K562 (cell line): ENCODE measurements at regions of chr1 and their contacts with region 1.

Region 1: GRCh38 chr1:207404849-207405525 is 49.1 kb upstream of the CR2 start:
- DNase-seq: peak; percentile 66 to 78 (median 68)
- ATAC-seq: peak; percentile 98
- H3K4me3 ChIP-seq: no peak overlapping the region
- H3K27ac ChIP-seq: no peak overlapping the region
- H3K4me1 ChIP-seq: peaks cover 0 to 7% of the 10 kb centered on the region in 2 experiments; a peak in 2 of 5 replicates
- H3K27me3 ChIP-seq: no peaks in the 10 kb centered on the region
- CTCF ChIP-seq: peak; percentile 71 to 86 (median 74)
- EP300 ChIP-seq: no peak
- POLR2A ChIP-seq: no peak
- RAD21 ChIP-seq: peak; percentile 95 to 99

Region 2: DNA sequence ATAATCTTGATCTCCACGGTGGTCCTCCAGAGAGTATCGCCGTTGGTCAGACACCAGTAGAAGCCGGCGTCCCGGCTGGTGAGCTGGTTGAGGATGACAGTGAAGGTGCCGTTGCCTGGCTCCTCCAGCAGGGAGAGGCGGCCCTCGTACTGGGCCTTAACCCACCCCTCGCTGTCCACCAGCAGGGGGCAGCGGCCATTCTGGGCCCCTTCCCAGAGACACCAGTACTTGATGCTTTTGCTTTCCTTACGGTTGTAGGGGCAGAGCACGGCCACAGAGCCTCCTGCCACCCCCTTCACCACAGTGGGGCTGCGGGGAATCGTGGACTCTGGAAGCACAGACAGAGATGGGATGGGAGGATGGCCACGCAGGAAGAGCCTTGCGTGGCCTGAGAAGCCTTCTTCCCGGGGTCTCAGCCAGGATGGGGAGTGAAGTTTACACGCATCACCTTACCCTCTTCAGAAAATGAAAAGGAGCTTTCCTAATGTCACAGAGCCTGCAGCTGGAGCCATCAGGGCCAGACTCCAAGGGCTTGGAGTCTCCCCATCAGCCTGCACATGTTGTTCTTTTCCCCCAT is 469.4 kb before region 1 on chr1:
- CTCF ChIA-PET with region 1: interaction called, 3 read pairs
- POLR2A ChIA-PET with region 1: no interaction called
- in situ Hi-C with region 1: no loop called
- intact Hi-C with region 1: loop called (anchors 5 kb)
- DNase-seq: peak; percentile 91 to 96 (median 92)
- ATAC-seq: peak; percentile 99
- H3K4me3 ChIP-seq: no peak overlapping the region
- H3K27ac ChIP-seq: no peak overlapping the region
- H3K4me1 ChIP-seq: peaks cover 9% of the 10 kb centered on the region in 2 experiments; a peak in 4 of 5 replicates
- H3K27me3 ChIP-seq: no peaks in the 10 kb centered on the region
- CTCF ChIP-seq: peak; percentile 100
- EP300 ChIP-seq: peak; percentile 31; the same call in 1 of the 2 replicates
- POLR2A ChIP-seq: no peak
- RAD21 ChIP-seq: peak; percentile 99

Region 3: DNA sequence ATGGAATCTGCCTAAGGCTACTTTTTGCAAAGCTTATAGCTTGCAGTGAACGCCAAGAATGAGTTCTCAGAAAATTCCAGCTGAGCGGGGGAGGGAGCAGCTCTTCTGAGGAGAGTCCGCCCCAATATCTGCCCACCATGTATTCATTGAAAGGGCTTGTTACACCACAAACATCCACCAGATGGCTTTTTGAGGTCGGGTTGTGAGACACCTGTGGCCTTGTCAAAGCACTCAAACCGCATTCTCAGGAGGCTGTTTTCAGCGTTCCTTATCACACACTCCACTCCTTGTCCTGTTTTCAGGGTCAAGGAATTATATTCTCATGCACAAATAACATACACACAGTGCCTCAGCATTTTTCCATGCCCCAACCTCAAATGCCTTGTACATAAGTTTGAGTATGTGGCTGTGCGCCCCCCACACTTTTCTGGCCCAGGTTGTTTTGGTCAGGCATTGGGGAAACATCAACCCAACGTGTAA is 320.2 kb before region 1 on chr1:
- CTCF ChIA-PET with region 1: interaction called, 22 read pairs
- POLR2A ChIA-PET with region 1: no interaction called
- in situ Hi-C with region 1: loop called (anchors 5 kb)
- intact Hi-C with region 1: loop called (anchors 1 kb)
- DNase-seq: peak; percentile 77 to 95 (median 86)
- ATAC-seq: peak; percentile 98
- H3K4me3 ChIP-seq: no peak overlapping the region
- H3K27ac ChIP-seq: peak overlapping the region; percentile 20; the same call in 2 of the 3 replicates
- H3K4me1 ChIP-seq: peaks cover 0 to 15% of the 10 kb centered on the region in 2 experiments; a peak in 4 of 5 replicates
- H3K27me3 ChIP-seq: no peaks in the 10 kb centered on the region
- CTCF ChIP-seq: peak; percentile 86 to 87 (median 87)
- EP300 ChIP-seq: peak; percentile 75
- POLR2A ChIP-seq: no peak
- RAD21 ChIP-seq: peak; percentile 98 to 99

Region 4: GRCh38 chr1:207181838-207182237 is 223.1 kb before region 1 on chr1:
- CTCF ChIA-PET with region 1: interaction called, 16 read pairs
- POLR2A ChIA-PET with region 1: no interaction called
- in situ Hi-C with region 1: no loop called
- intact Hi-C with region 1: loop called (anchors 1 kb)
- DNase-seq: peak in 1 of 4 experiments; percentile 28
- ATAC-seq: peak; percentile 41; the same call in 1 of the 3 replicates
- H3K4me3 ChIP-seq: no peak overlapping the region
- H3K27ac ChIP-seq: no peak overlapping the region
- H3K4me1 ChIP-seq: no peaks in the 10 kb centered on the region
- H3K27me3 ChIP-seq: no peaks in the 10 kb centered on the region
- CTCF ChIP-seq: peak in 2 of 3 experiments; percentile 29 to 66; a peak in 3 of 6 replicates
- EP300 ChIP-seq: no peak
- POLR2A ChIP-seq: no peak
- RAD21 ChIP-seq: peak; percentile 87 to 93

Region 5: GRCh38 chr1:207259391-207259790 is 145.6 kb before region 1 on chr1:
- CTCF ChIA-PET with region 1: no interaction called
- POLR2A ChIA-PET with region 1: no interaction called
- in situ Hi-C with region 1: no loop called
- intact Hi-C with region 1: loop called (anchors 1 kb)
- DNase-seq: peak in 1 of 4 experiments; percentile 46
- ATAC-seq: peak; percentile 89
- H3K4me3 ChIP-seq: no peak overlapping the region
- H3K27ac ChIP-seq: no peak overlapping the region
- H3K4me1 ChIP-seq: no peaks in the 10 kb centered on the region; a peak in 1 of 5 replicates
- H3K27me3 ChIP-seq: no peaks in the 10 kb centered on the region
- CTCF ChIP-seq: peak; percentile 51 to 56 (median 55); a peak in 5 of 6 replicates
- EP300 ChIP-seq: no peak
- POLR2A ChIP-seq: no peak
- RAD21 ChIP-seq: peak; percentile 46 to 84

Region 6: GRCh38 chr1:207274882-207275281 is 130.1 kb before region 1 on chr1:
- CTCF ChIA-PET with region 1: no interaction called
- POLR2A ChIA-PET with region 1: no interaction called
- in situ Hi-C with region 1: no loop called
- intact Hi-C with region 1: no loop called
- DNase-seq: no peak
- ATAC-seq: no peak
- H3K4me3 ChIP-seq: no peak overlapping the region
- H3K27ac ChIP-seq: no peak overlapping the region
- H3K4me1 ChIP-seq: no peaks in the 10 kb centered on the region
- H3K27me3 ChIP-seq: no peaks in the 10 kb centered on the region
- CTCF ChIP-seq: no peak
- EP300 ChIP-seq: no peak
- POLR2A ChIP-seq: no peak
- RAD21 ChIP-seq: no peak

Region 7: GRCh38 chr1:207393610-207394009 is 11.4 kb before region 1 on chr1:
- CTCF ChIA-PET with region 1: no interaction called
- POLR2A ChIA-PET with region 1: no interaction called
- in situ Hi-C with region 1: no loop called
- intact Hi-C with region 1: no loop called
- DNase-seq: no peak
- ATAC-seq: no peak
- H3K4me3 ChIP-seq: no peak overlapping the region
- H3K27ac ChIP-seq: no peak overlapping the region
- H3K4me1 ChIP-seq: no peaks in the 10 kb centered on the region; a peak in 1 of 5 replicates
- H3K27me3 ChIP-seq: no peaks in the 10 kb centered on the region
- CTCF ChIP-seq: no peak
- EP300 ChIP-seq: no peak
- POLR2A ChIP-seq: no peak
- RAD21 ChIP-seq: no peak

Region 8: GRCh38 chr1:207698822-207699483 is 294.0 kb after region 1 on chr1:
- CTCF ChIA-PET with region 1: interaction called, 3 read pairs
- POLR2A ChIA-PET with region 1: no interaction called
- in situ Hi-C with region 1: no loop called
- intact Hi-C with region 1: loop called (anchors 2 kb)
- DNase-seq: peak; percentile 30 to 87 (median 37)
- ATAC-seq: peak; percentile 92
- H3K4me3 ChIP-seq: no peak overlapping the region
- H3K27ac ChIP-seq: no peak overlapping the region
- H3K4me1 ChIP-seq: no peaks in the 10 kb centered on the region
- H3K27me3 ChIP-seq: no peaks in the 10 kb centered on the region
- CTCF ChIP-seq: peak; percentile 76 to 98 (median 95)
- EP300 ChIP-seq: no peak
- POLR2A ChIP-seq: no peak
- RAD21 ChIP-seq: peak; percentile 96 to 97